Aorta (tissue), 5 donors: ENCODE measurements at regions of chr1 and their contacts with region 1.

Region 1: GRCh38 chr1:41573785-41574713 is 89.6 kb upstream of the EDN2 start:
- DNase-seq: peak; percentile 86 to 90
- ATAC-seq: peak; percentile 86
- H3K4me3 ChIP-seq: no peak overlapping the region
- H3K27ac ChIP-seq: no peak overlapping the region
- H3K4me1 ChIP-seq: no peaks in the 10 kb centered on the region
- H3K27me3 ChIP-seq: no peaks in the 10 kb centered on the region

Region 2: DNA sequence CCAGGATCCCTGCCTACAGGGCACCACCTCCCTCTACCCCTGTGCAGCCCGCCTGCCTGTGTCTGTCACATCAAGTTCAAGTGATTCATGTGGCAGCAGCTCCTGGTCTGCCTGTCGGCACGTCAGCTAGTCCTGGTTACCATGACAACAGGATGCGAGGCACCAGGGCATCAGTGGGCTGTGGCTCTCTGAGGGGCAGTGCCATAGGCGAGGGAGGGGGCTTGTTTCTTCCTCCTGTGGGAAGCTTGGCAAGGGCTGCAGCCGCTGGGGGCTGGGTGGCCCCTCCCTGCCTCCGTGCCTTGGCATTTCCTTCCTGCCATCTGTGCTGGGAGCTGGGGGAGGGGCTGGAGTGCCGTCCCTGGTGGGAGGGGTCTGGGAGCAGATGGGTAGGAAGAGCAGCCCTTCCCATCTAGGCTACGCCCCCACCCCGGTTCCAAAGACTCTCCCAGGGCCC is 169.7 kb before region 1 on chr1:
- intact Hi-C with region 1: no loop called
- DNase-seq: peak in 1 of 2 donors; percentile 75
- ATAC-seq: peak; percentile 19
- H3K4me3 ChIP-seq: no peak overlapping the region
- H3K27ac ChIP-seq: no peak overlapping the region
- H3K4me1 ChIP-seq: no peaks in the 10 kb centered on the region
- H3K27me3 ChIP-seq: no peaks in the 10 kb centered on the region

Region 3: DNA sequence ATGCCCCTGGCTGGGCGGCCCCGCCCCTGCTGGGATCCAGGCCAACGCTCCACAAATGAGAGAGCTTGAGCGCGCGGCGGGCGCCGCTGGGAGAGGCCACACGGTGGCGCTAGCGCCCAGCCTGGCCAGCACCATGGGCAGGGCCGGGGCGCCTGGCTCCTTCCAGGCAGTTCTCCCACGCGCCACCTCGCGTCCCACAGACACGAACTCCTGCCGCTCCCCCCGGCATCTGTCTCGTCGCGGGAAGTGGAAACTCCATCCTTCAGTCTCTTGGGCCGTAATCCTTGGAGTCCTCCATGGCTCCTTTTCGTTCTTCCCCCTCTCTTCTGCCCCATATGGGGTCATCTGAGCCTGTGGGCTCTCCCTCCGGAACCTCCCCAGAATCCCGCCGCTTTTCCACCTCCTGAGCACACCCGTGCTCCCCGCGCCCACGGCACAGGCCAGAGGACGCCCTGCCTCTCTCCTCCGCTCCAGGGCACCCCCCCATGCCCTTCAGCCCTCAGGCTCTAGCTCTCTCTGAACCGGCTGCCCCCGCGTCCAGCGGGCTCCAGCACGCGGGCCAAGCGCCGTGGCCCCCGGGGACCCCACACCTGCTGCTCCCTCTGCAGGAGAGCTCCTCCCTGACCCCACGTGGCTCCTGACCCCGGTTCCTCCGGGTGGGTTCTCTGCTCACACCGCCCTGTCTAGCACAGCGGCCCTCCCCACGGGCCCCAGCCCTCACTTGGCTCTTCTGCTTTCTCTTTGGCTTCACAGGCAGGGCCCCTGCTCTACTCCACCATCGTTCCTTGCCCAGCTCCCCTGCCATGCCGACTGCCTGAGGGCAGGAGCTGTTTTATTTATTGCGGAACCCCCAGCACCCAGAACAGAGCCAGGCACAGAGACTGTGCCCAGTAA is 57.6 kb before region 1 on chr1:
- intact Hi-C with region 1: loop called in 1 of 2 experiments (anchors 1 kb)
- DNase-seq: peak; percentile 91 to 97
- ATAC-seq: peak; percentile 96
- H3K4me3 ChIP-seq: no peak overlapping the region
- H3K27ac ChIP-seq: no peak overlapping the region
- H3K4me1 ChIP-seq: no peaks in the 10 kb centered on the region
- H3K27me3 ChIP-seq: no peaks in the 10 kb centered on the region

Region 4: DNA sequence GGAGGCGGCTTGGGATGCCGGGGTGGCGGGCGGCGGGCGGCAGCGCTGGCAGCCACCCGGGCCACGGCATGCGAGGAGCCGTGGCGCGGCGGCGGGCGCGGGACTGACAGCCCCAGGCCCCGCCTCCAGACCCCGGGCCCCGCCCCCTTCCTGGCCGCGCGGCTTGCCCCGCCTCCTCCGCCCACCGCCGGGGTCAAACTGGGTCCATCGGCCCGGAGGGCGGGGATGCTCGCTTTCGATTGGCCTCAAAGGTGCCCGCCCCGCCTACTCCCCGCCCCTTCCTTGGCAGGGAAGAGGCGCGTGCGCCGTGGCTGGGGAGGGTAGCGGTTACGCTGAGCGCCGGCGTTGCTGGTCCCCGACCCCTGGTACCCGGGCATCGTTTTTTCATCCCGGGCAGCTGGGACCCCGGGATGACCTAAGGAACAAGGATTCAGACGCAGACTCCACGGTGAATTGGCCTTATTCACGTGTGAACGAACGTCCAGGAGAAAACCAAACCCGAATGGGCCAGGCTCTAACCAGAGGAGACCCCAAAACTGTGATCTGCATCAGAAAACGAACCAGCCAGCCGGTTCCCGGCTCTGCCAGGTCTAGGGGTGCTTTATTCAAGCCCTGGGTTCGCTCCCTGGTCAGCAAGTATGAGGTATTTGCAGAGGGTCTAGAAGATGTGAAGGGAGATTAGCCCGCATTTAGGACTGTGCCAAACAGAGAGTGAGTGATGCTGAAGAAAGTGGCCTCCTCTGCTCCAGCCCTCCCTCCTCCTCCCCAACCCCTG is 462.0 kb after region 1 on chr1:
- intact Hi-C with region 1: loop called in 1 of 2 experiments (anchors 5 kb)
- DNase-seq: peak; percentile 98 to 99
- ATAC-seq: peak; percentile 97
- H3K4me3 ChIP-seq: peak overlapping the region; percentile 69 to 92
- H3K27ac ChIP-seq: no peak overlapping the region
- H3K4me1 ChIP-seq: peaks cover 0 to 4% of the 10 kb centered on the region in 2 donors
- H3K27me3 ChIP-seq: no peaks in the 10 kb centered on the region

Region 5: DNA sequence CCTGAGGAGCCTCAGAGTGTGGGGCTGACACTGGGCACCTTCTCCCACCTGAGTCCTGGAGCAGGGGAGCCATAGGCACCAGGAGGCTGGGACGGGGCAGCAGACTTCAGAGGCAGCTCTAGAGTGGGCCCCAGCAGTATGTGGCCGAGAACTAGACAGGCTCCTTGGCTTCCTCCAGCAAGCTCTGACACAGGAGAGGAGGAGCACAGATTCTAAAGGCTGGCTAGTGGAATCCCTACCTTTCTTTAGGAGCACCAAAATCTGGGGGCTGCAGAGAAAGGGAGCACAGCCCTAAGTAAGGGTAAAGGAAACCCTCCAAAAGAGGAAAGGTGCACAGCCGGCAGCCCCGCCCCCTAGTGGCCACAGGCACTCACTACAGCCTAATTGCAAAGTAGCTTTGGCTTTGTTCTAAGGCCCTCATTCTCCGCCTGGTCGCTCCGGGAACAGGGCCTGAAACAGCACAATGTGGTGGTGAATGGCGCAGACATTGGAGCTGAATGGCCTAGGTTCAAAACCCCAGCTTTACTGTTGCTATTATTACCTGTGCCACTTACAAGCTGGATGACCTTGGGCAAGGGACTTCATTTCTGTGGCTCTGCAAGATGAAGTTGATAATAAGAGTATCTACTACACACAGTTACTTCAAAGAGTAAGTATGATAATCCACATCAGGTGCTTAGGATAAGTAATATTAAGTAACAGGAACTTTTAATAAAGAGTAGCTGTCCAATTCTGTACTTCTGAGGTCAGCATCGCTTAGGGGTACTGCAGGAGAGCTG is 599.3 kb after region 1 on chr1:
- intact Hi-C with region 1: loop called (anchors 1 to 5 kb)
- DNase-seq: peak; percentile 60 to 84
- ATAC-seq: peak; percentile 77
- H3K4me3 ChIP-seq: no peak overlapping the region
- H3K27ac ChIP-seq: no peak overlapping the region
- H3K4me1 ChIP-seq: no peaks in the 10 kb centered on the region
- H3K27me3 ChIP-seq: no peaks in the 10 kb centered on the region